Mammary epithelial cell (primary cell): ENCODE measurements at regions of chr3 and their contacts with region 1.

Region 1: DNA sequence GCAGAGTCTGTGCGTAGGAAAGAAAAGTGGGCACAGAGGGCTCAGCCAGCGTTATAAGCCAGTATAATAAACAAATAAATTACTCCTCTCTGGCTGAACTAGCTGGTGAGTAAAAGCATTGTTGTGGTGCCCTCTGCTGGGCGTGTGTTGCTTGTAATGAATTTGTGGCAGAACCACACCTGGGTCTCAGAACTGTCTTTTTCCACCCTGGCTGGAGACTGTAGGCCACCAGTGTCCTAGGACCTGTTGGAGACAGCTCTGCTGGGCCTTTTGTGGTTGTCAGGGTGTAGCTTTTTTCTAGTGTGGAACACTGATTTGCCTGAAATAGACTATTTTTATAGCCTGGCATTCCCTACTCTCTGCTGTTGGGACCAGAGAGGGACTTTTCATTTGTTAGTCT is 130.5 kb upstream of the EIF1B start:
- DNase-seq: peak; percentile 44
- H3K4me3 ChIP-seq: no peak overlapping the region
- H3K27ac ChIP-seq: no peak overlapping the region
- H3K4me1 ChIP-seq: no peaks in the 10 kb centered on the region
- H3K27me3 ChIP-seq: no peaks in the 10 kb centered on the region
- CTCF ChIP-seq: peak; percentile 61 to 76

Region 2: DNA sequence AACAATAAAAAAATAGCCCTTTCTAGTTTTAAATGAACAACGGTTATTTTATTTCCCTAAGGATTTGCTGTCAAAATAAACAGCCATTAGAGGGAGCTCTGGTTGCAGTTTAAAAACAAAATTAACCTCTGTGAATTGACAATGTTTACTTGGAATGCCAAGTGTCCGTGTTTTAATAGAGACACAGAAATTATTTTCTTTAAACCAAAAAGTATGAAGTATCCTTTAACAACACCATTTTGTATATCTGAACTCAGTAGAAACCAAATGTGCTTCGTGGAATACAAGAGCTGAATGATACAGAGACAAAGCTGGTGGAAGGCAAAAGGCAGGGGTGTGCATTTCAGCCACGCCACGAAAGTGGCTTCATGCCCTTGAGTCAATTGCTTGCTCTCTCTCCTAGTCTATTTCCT is 637.1 kb before region 1 on chr3:
- CTCF ChIA-PET with region 1: no interaction called
- dilution Hi-C with region 1: no loop called
- in situ Hi-C with region 1: loop called in 1 of 2 experiments (anchors 25 kb)
- intact Hi-C with region 1: loop called (anchors 1 kb)
- DNase-seq: no peak
- H3K4me3 ChIP-seq: no peak overlapping the region
- H3K27ac ChIP-seq: no peak overlapping the region
- H3K4me1 ChIP-seq: peaks cover 8% of the 10 kb centered on the region
- H3K27me3 ChIP-seq: no peaks in the 10 kb centered on the region
- CTCF ChIP-seq: peak; percentile 49 to 63

Region 3: DNA sequence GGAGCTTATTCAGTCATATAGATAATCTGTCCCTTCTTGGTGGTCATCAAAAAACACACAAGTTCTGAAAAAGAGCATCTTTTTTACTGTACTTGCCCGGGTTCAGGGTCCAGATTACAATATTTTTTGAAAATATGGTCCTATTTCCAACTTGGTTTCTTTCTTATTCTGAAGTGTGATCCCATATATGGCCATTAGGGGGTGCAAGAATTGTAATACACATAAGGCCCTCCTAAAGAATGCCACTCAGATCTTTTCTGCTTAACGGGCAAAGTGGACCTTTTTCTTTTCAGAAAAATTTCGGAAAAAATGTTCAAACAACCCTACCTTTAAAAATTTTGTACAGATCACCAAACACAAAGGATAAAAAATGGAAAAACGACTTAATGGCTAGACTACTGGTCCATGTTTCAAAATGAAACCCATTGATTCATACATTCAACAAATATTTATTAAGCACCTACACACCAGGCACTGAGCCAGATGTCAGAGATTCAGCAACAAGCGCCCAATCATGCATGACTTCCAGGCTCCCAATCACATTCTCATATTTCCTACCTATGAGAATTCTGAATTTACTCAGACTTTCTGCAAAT is 471.6 kb before region 1 on chr3:
- CTCF ChIA-PET with region 1: no interaction called
- dilution Hi-C with region 1: no loop called
- in situ Hi-C with region 1: loop called (anchors 25 kb)
- intact Hi-C with region 1: loop called (anchors 1 kb)
- DNase-seq: no peak
- H3K4me3 ChIP-seq: no peak overlapping the region
- H3K27ac ChIP-seq: no peak overlapping the region
- H3K4me1 ChIP-seq: no peaks in the 10 kb centered on the region
- H3K27me3 ChIP-seq: peaks cover 5% of the 10 kb centered on the region
- CTCF ChIP-seq: peak; percentile 57 to 67

Region 4: GRCh38 chr3:39809181-39809994 is 369.6 kb before region 1 on chr3 and contains the start of gene MYRIP:
- CTCF ChIA-PET with region 1: interaction called, 3 read pairs
- dilution Hi-C with region 1: no loop called
- in situ Hi-C with region 1: loop called in 1 of 2 experiments (anchors 10 kb)
- intact Hi-C with region 1: loop called (anchors 1 kb)
- DNase-seq: no peak
- H3K4me3 ChIP-seq: peak within 1 kb of the TSS in 2 of 3 experiments; percentile 27 to 41
- H3K27ac ChIP-seq: no peak within 1 kb of the TSS
- H3K4me1 ChIP-seq: peaks cover 8% of the 10 kb centered on the region
- H3K27me3 ChIP-seq: peaks cover 38% of the 10 kb centered on the region
- CTCF ChIP-seq: no peak
- total RNA-seq, gene MYRIP: 0.17 TPM in 1 of 2 donors, not detected in the other

Region 5: DNA sequence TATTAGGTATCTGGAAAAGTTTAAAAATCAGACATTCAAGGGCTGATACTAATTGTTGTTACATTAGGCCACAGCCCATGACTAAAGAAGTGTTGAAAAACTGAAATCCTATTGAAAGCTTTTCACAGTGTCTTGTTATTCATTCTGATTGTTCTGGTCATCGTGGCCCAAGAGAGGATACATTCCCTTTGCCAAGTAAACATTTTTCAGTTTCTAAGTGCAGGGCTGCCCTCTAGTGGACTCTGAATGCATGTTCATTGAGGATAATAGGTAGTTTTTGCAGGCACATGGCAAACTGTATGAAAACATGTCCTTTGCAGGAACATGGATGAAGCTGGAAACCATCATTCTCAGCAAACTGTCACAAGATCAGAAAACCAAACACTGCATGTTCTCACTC is 188.5 kb before region 1 on chr3:
- CTCF ChIA-PET with region 1: no interaction called
- dilution Hi-C with region 1: no loop called
- in situ Hi-C with region 1: loop called in 1 of 2 experiments (anchors 10 kb)
- intact Hi-C with region 1: loop called (anchors 1 kb)
- DNase-seq: peak; percentile 55
- H3K4me3 ChIP-seq: no peak overlapping the region
- H3K27ac ChIP-seq: no peak overlapping the region
- H3K4me1 ChIP-seq: no peaks in the 10 kb centered on the region
- H3K27me3 ChIP-seq: no peaks in the 10 kb centered on the region
- CTCF ChIP-seq: peak; percentile 72 to 73

Region 6: GRCh38 chr3:40043444-40043755 is 135.6 kb before region 1 on chr3:
- CTCF ChIA-PET with region 1: no interaction called
- dilution Hi-C with region 1: no loop called
- in situ Hi-C with region 1: no loop called
- intact Hi-C with region 1: loop called (anchors 1 kb)
- DNase-seq: peak; percentile 86
- H3K4me3 ChIP-seq: no peak overlapping the region
- H3K27ac ChIP-seq: peak overlapping the region; percentile 7
- H3K4me1 ChIP-seq: peaks cover 29% of the 10 kb centered on the region
- H3K27me3 ChIP-seq: no peaks in the 10 kb centered on the region
- CTCF ChIP-seq: no peak

Region 7: GRCh38 chr3:40432793-40433192 is 253.8 kb after region 1 on chr3:
- CTCF ChIA-PET with region 1: no interaction called
- dilution Hi-C with region 1: no loop called
- in situ Hi-C with region 1: loop called in 1 of 2 experiments (anchors 25 kb)
- intact Hi-C with region 1: no loop called
- DNase-seq: peak; percentile 6
- H3K4me3 ChIP-seq: no peak overlapping the region
- H3K27ac ChIP-seq: no peak overlapping the region
- H3K4me1 ChIP-seq: no peaks in the 10 kb centered on the region
- H3K27me3 ChIP-seq: peaks cover 2% of the 10 kb centered on the region
- CTCF ChIP-seq: peak in 1 of 2 donors; percentile 35